ENCODE measurements at regions of chr14 and their contacts with region 1.

Region 1: GRCh38 chr14:75427482-75428229 is at the start of gene JDP2:
- H3K4me3 Mint-ChIP-seq: peak within 1 kb of the TSS; percentile 78
- H3K27ac Mint-ChIP-seq: peak within 1 kb of the TSS; percentile 81
- H3K4me1 Mint-ChIP-seq: peaks cover 49% of the 10 kb centered on the region
- H3K27me3 Mint-ChIP-seq: no peaks in the 10 kb centered on the region

Region 2: DNA sequence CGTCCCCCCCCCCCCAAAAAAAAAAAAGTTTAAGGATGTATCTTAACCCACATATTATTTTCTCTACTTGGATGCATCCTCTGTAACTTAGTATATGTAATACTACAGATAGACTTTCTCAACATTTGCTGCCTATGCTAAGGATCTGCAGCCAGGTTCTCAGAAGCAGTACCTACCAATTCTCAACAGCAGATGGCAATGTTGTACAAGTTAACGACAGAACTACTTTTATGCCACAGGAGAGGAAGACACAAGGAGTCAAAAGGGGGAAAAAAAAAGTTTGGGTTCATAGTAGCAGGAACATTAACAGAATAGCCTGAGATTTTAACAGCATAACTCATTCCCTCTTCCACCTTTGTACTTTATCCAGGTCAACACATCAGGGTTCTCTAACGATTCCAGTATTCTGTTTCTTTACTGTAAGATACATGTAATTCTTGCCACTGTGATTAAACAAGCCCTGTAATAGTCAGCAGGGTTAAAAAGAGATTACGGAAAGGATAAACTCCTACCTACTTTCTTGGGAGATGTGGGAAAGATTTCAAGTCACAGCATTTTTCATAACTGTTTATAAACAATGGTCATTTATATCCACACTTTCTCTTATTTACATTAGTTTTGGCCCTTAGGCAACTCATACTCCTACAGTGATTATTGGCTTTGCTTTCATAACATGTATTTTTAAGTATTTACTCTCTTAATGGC is 295.1 kb before region 1 on chr14:
- intact Hi-C with region 1: loop called (anchors 10 kb)
- H3K4me3 Mint-ChIP-seq: no peak overlapping the region
- H3K27ac Mint-ChIP-seq: no peak overlapping the region
- H3K4me1 Mint-ChIP-seq: peaks cover 25% of the 10 kb centered on the region
- H3K27me3 Mint-ChIP-seq: no peaks in the 10 kb centered on the region

Region 3: GRCh38 chr14:75278422-75279161 is 149.1 kb before region 1 on chr14 and contains the start of gene FOS:
- intact Hi-C with region 1: no loop called
- H3K4me3 Mint-ChIP-seq: peak within 1 kb of the TSS; percentile 90
- H3K27ac Mint-ChIP-seq: peak within 1 kb of the TSS; percentile 98
- H3K4me1 Mint-ChIP-seq: peaks cover 72% of the 10 kb centered on the region
- H3K27me3 Mint-ChIP-seq: peaks cover under 1% of the 10 kb centered on the region

Region 4: GRCh38 chr14:75323571-75323970 is 104.1 kb before region 1 on chr14:
- intact Hi-C with region 1: no loop called
- H3K4me3 Mint-ChIP-seq: no peak overlapping the region
- H3K27ac Mint-ChIP-seq: no peak overlapping the region
- H3K4me1 Mint-ChIP-seq: peaks cover 15% of the 10 kb centered on the region
- H3K27me3 Mint-ChIP-seq: no peaks in the 10 kb centered on the region

Region 5: GRCh38 chr14:75340921-75341320 is 86.7 kb before region 1 on chr14:
- intact Hi-C with region 1: loop called (anchors 2 kb)
- H3K4me3 Mint-ChIP-seq: peak overlapping the region; percentile 18
- H3K27ac Mint-ChIP-seq: peak overlapping the region; percentile 96
- H3K4me1 Mint-ChIP-seq: peaks cover 75% of the 10 kb centered on the region
- H3K27me3 Mint-ChIP-seq: no peaks in the 10 kb centered on the region

Region 6: GRCh38 chr14:75383721-75384120 is 43.9 kb before region 1 on chr14:
- intact Hi-C with region 1: loop called (anchors 5 kb)
- H3K4me3 Mint-ChIP-seq: no peak overlapping the region
- H3K27ac Mint-ChIP-seq: peak overlapping the region; percentile 52
- H3K4me1 Mint-ChIP-seq: peaks cover 19% of the 10 kb centered on the region
- H3K27me3 Mint-ChIP-seq: no peaks in the 10 kb centered on the region

Region 7: DNA sequence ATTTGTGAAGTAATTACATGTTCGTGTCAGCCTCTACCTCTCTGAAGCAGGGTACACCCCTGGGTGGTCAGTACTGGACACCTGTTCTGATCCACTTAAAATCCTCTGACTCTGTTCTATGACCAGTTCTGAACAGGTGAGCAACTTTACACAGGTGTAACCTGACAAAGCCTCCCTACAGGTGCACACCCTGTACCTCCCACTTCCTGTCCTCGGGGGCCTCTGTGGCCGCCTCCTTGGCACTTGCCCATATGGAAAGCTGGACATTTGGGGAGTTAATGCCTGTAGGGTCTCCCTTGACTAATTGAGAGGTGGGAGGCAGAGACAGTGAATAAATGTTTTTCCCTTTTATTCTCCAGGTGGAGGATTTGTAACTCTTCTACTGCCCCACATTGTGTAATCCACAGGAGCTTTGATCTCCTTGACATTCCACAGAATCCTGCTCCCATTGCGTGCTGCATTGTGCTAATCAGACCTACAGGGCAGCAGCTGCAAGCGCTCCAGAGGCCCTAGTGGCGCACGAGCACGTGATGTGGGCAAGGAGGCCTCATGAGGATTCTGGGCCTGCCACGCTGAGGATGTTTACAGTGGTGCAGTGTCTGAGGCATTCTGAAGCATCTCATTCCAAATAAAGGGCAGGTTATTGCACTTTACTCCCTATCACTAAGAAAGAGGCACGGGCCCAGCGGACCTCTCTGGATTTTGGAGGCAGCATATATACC is 48.8 kb after region 1 on chr14:
- intact Hi-C with region 1: no loop called
- H3K4me3 Mint-ChIP-seq: no peak overlapping the region
- H3K27ac Mint-ChIP-seq: no peak overlapping the region
- H3K4me1 Mint-ChIP-seq: peaks cover 11% of the 10 kb centered on the region
- H3K27me3 Mint-ChIP-seq: no peaks in the 10 kb centered on the region

Region 8: DNA sequence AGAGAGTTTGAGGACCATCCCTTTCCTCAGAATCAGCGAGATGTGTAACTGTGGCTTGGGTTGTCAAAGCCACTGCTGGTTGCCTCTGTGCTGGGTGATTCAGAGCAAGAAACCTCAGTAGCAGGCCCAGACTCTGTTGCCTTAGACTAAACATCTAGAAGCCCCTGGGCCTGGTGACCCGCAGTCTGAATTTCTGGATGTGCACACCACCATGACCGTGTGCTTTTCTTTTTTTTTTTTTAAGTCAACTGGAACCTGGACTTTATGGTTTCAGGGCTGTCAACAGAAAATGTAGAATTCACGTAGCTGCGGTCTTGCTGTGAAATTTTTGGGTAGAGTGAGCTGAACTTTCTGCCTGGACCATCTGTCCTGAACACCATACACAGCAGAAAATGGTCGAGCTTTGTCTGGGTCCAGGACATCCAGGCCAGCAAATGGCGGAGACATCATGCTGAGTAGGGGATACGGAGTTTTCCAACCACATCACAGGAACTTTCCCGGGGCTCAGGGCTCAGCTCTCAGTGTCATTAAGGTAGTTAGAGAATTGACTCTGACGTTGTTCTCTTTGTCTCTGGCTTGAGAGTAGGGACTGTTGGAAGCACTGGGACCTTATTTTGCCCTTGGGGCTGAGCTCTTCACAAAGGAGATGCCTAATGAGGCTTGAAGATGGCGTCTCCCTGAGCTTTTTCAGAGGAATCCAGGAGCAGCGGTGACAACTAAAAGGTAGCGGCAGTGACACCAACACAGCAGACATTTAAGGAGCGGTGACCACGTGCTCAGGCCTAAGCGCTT is 71.6 kb after region 1 on chr14:
- intact Hi-C with region 1: no loop called
- H3K4me3 Mint-ChIP-seq: no peak overlapping the region
- H3K27ac Mint-ChIP-seq: no peak overlapping the region
- H3K4me1 Mint-ChIP-seq: peaks cover 35% of the 10 kb centered on the region
- H3K27me3 Mint-ChIP-seq: no peaks in the 10 kb centered on the region

Measured in dendritic cell treated with granulocyte-macrophage colony-stimulating factor and Interleukin-4, amounts not matched to agents 40 ng/mL and 50 ng/mL, for 4 days (primary cell).